ENCODE measurements at regions of chr3 and their contacts with region 1.

Region 1: DNA sequence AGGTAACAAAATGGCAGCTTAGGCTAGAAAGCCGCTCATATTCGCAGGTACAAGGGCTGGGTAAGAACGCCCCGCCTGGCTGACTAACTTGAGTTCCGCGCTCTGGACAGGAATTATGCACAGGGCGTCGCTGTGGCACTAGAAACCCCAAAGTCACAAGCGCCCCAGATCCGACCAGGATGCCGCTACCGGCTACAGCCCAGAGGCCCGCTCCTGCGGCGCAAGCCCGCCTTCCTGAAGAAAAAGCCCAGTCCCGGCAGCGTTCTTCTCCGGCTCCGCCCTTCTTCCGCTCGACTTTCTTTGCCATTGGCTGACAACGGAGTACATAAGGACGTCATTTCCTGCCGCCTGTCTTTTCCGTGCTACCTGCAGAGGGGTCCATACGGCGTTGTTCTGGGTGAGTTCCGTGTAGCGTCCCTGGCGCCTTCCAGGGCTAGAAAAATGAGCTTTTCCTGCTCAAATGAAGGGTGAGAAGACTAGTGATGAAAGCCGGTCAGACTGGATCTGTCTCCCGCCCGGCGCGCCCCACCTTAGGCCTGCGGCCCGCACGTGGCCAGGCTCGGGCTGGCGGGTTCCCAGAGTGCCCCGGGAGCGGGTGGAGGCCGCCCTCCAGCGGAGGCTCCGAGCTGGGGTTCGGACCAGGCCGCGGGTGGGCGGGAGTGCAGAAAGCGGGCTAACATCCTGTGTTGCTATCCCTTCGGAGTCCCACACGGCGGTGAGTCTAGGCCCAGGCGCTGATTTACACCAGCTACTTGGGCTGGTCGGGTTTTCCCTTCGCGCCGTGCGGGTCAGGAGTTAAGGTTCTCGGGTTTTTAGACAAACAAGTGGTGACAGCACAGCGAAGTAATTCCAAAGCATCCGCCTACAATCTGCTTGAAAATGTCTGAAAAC is at the start of gene RPSA:
- DNase-seq: peak; percentile 98
- ATAC-seq: peak; percentile 93
- H3K4me3 ChIP-seq: peak within 1 kb of the TSS; percentile 72 to 97 (median 83)
- H3K4me3 Mint-ChIP-seq: peak within 1 kb of the TSS; percentile 89
- H3K27ac ChIP-seq: peak within 1 kb of the TSS; percentile 75 to 76
- H3K27ac Mint-ChIP-seq: peak within 1 kb of the TSS; percentile 88
- H3K4me1 ChIP-seq: peaks cover 22 to 35% of the 10 kb centered on the region in 2 donors
- H3K4me1 Mint-ChIP-seq: peaks cover 39% of the 10 kb centered on the region
- H3K27me3 ChIP-seq: no peaks in the 10 kb centered on the region
- H3K27me3 Mint-ChIP-seq: no peaks in the 10 kb centered on the region
- CTCF ChIP-seq: peak; percentile 22
- total RNA-seq, gene RPSA: 1,418 and 1,460 TPM in 2 replicates

Region 2: GRCh38 chr3:38136777-38137614 is 1269.6 kb before region 1 on chr3 and contains the start of gene ACAA1:
- CTCF ChIA-PET with region 1: no interaction called
- POLR2A ChIA-PET with region 1: no interaction called
- intact Hi-C with region 1: loop called (anchors 5 kb)
- DNase-seq: peak; percentile 99
- ATAC-seq: peak; percentile 91
- H3K4me3 ChIP-seq: peak within 1 kb of the TSS; percentile 84 to 98 (median 92)
- H3K4me3 Mint-ChIP-seq: peak within 1 kb of the TSS; percentile 92
- H3K27ac ChIP-seq: peak within 1 kb of the TSS; percentile 85 to 87
- H3K27ac Mint-ChIP-seq: peak within 1 kb of the TSS; percentile 94
- H3K4me1 ChIP-seq: peaks cover 39 to 52% of the 10 kb centered on the region in 2 donors
- H3K4me1 Mint-ChIP-seq: peaks cover 65% of the 10 kb centered on the region
- H3K27me3 ChIP-seq: no peaks in the 10 kb centered on the region
- H3K27me3 Mint-ChIP-seq: no peaks in the 10 kb centered on the region
- CTCF ChIP-seq: no peak
- total RNA-seq, gene ACAA1: 87.4 and 98.4 TPM in 2 replicates

Region 3: GRCh38 chr3:38496131-38496910 is 910.3 kb before region 1 on chr3 and contains the start of gene EXOG:
- CTCF ChIA-PET with region 1: no interaction called
- POLR2A ChIA-PET with region 1: no interaction called
- intact Hi-C with region 1: loop called (anchors 1 kb)
- DNase-seq: peak; percentile 95
- ATAC-seq: peak; percentile 96
- H3K4me3 ChIP-seq: peak within 1 kb of the TSS; percentile 79 to 95 (median 90)
- H3K4me3 Mint-ChIP-seq: peak within 1 kb of the TSS; percentile 95
- H3K27ac ChIP-seq: peak within 1 kb of the TSS; percentile 59 to 81
- H3K27ac Mint-ChIP-seq: peak within 1 kb of the TSS; percentile 83
- H3K4me1 ChIP-seq: peaks cover 6 to 12% of the 10 kb centered on the region in 2 donors
- H3K4me1 Mint-ChIP-seq: peaks cover 19% of the 10 kb centered on the region
- H3K27me3 ChIP-seq: no peaks in the 10 kb centered on the region
- H3K27me3 Mint-ChIP-seq: no peaks in the 10 kb centered on the region
- CTCF ChIP-seq: peak; percentile 92
- total RNA-seq, gene EXOG: 36.8 and 38.3 TPM in 2 replicates

Region 4: GRCh38 chr3:39255503-39256325 is 150.9 kb before region 1 on chr3:
- CTCF ChIA-PET with region 1: no interaction called
- POLR2A ChIA-PET with region 1: no interaction called
- intact Hi-C with region 1: loop called (anchors 1 kb)
- DNase-seq: peak; percentile 90
- ATAC-seq: peak; percentile 97
- H3K4me3 ChIP-seq: peak overlapping the region in 2 of 5 experiments; percentile 21 to 35
- H3K4me3 Mint-ChIP-seq: peak overlapping the region; percentile 81
- H3K27ac ChIP-seq: peak overlapping the region; percentile 77 to 79
- H3K27ac Mint-ChIP-seq: peak overlapping the region; percentile 97
- H3K4me1 ChIP-seq: peaks cover 79 to 82% of the 10 kb centered on the region in 2 donors
- H3K4me1 Mint-ChIP-seq: peaks cover 82% of the 10 kb centered on the region
- H3K27me3 ChIP-seq: peaks cover 0 to 3% (median 0%) of the 10 kb centered on the region in 4 experiments
- H3K27me3 Mint-ChIP-seq: peaks cover 4% of the 10 kb centered on the region
- CTCF ChIP-seq: no peak

Region 5: GRCh38 chr3:39383045-39383880 is 23.4 kb before region 1 on chr3 and contains the start of gene SLC25A38:
- CTCF ChIA-PET with region 1: interaction called, 9 read pairs
- POLR2A ChIA-PET with region 1: interaction called, 17 read pairs
- intact Hi-C with region 1: loop called (anchors 1 kb)
- DNase-seq: peak; percentile 93
- ATAC-seq: peak; percentile 71
- H3K4me3 ChIP-seq: peak within 1 kb of the TSS; percentile 4 to 91 (median 83)
- H3K4me3 Mint-ChIP-seq: peak within 1 kb of the TSS; percentile 98
- H3K27ac ChIP-seq: peak within 1 kb of the TSS; percentile 94 to 96
- H3K27ac Mint-ChIP-seq: peak within 1 kb of the TSS; percentile 99
- H3K4me1 ChIP-seq: peaks cover 43 to 50% of the 10 kb centered on the region in 2 donors
- H3K4me1 Mint-ChIP-seq: peaks cover 42% of the 10 kb centered on the region
- H3K27me3 ChIP-seq: no peaks in the 10 kb centered on the region
- H3K27me3 Mint-ChIP-seq: no peaks in the 10 kb centered on the region
- CTCF ChIP-seq: peak; percentile 60
- total RNA-seq, gene SLC25A38: 46.3 and 53.0 TPM in 2 replicates

Region 6: DNA sequence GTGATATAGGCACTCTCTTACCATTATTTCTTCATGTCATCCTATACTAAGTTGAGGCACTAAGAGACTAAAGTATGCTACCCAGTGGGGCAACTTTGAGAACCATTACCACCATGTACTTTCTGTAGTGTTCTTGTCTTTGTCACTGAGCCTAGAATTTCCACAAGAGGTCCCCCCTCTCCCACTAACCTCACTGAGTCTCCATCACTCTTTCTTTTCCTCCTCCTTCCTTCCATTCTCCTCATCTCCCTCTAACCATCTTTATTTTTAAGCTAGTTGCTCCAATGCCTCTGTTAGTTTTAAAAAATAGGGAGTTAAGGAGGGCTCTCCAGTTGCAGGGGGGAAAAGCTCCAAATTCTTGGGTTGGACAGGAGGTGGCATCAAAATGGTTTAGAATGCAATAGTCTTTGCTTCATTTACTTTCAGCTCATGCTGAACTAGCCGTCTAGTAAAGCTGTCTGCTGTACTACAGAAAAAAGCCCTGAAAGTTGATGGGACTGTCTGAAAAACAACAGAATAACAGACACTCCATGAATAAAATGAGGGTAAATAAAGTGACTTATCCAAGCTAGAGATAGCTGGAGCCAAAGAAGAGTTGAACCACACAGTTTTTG is 317.7 kb after region 1 on chr3:
- CTCF ChIA-PET with region 1: no interaction called
- POLR2A ChIA-PET with region 1: no interaction called
- intact Hi-C with region 1: no loop called
- DNase-seq: no peak
- ATAC-seq: no peak
- H3K4me3 ChIP-seq: no peak overlapping the region
- H3K4me3 Mint-ChIP-seq: no peak overlapping the region
- H3K27ac ChIP-seq: no peak overlapping the region
- H3K27ac Mint-ChIP-seq: no peak overlapping the region
- H3K4me1 ChIP-seq: no peaks in the 10 kb centered on the region
- H3K4me1 Mint-ChIP-seq: no peaks in the 10 kb centered on the region
- H3K27me3 ChIP-seq: no peaks in the 10 kb centered on the region
- H3K27me3 Mint-ChIP-seq: no peaks in the 10 kb centered on the region
- CTCF ChIP-seq: no peak

Region 7: GRCh38 chr3:40079203-40079846 is 672.7 kb after region 1 on chr3:
- CTCF ChIA-PET with region 1: no interaction called
- POLR2A ChIA-PET with region 1: no interaction called
- intact Hi-C with region 1: no loop called
- DNase-seq: no peak
- ATAC-seq: no peak
- H3K4me3 ChIP-seq: no peak overlapping the region
- H3K4me3 Mint-ChIP-seq: no peak overlapping the region
- H3K27ac ChIP-seq: no peak overlapping the region
- H3K27ac Mint-ChIP-seq: no peak overlapping the region
- H3K4me1 ChIP-seq: no peaks in the 10 kb centered on the region
- H3K4me1 Mint-ChIP-seq: no peaks in the 10 kb centered on the region
- H3K27me3 ChIP-seq: no peaks in the 10 kb centered on the region
- H3K27me3 Mint-ChIP-seq: peaks cover 3% of the 10 kb centered on the region
- CTCF ChIP-seq: no peak

Region 8: DNA sequence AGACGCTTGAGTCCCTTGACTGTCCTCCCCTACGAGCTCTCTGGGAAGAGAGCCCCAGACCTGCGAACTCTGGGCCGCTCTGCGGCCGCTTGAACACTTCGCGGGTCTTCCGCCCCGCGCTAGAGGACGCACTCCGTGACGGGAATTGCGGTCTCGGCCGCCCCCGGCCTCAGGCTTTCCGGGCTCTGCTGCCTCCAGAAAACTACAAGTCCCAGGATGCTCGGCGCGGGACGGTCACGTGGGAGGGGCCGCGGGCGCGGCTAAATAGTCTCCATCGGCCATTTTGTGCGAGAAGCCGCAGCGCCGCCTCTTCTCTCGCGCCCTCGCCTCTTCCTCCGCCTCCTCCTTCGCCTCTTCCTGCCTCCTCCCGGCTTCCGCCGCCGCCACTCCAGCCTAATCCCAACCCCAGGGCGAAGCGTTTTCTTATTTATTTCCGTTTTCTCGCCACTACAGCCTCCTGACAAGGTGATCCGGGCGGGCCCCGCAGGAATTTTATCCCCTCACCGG is 902.9 kb after region 1 on chr3 and contains the start of gene EIF1B:
- CTCF ChIA-PET with region 1: no interaction called
- POLR2A ChIA-PET with region 1: no interaction called
- intact Hi-C with region 1: loop called (anchors 1 kb)
- DNase-seq: peak; percentile 98
- ATAC-seq: peak; percentile 87
- H3K4me3 ChIP-seq: peak within 1 kb of the TSS; percentile 77 to 98 (median 90)
- H3K4me3 Mint-ChIP-seq: peak within 1 kb of the TSS; percentile 96
- H3K27ac ChIP-seq: peak within 1 kb of the TSS; percentile 96 to 97
- H3K27ac Mint-ChIP-seq: peak within 1 kb of the TSS; percentile 99
- H3K4me1 ChIP-seq: peaks cover 15 to 20% of the 10 kb centered on the region in 2 donors
- H3K4me1 Mint-ChIP-seq: peaks cover 34% of the 10 kb centered on the region
- H3K27me3 ChIP-seq: no peaks in the 10 kb centered on the region
- H3K27me3 Mint-ChIP-seq: no peaks in the 10 kb centered on the region
- CTCF ChIP-seq: peak; percentile 90
- total RNA-seq, gene EIF1B: 70.6 and 78.1 TPM in 2 replicates